GM18951 (cell line): ENCODE measurements at regions of chr15 and their contacts with region 1.

Region 1: DNA sequence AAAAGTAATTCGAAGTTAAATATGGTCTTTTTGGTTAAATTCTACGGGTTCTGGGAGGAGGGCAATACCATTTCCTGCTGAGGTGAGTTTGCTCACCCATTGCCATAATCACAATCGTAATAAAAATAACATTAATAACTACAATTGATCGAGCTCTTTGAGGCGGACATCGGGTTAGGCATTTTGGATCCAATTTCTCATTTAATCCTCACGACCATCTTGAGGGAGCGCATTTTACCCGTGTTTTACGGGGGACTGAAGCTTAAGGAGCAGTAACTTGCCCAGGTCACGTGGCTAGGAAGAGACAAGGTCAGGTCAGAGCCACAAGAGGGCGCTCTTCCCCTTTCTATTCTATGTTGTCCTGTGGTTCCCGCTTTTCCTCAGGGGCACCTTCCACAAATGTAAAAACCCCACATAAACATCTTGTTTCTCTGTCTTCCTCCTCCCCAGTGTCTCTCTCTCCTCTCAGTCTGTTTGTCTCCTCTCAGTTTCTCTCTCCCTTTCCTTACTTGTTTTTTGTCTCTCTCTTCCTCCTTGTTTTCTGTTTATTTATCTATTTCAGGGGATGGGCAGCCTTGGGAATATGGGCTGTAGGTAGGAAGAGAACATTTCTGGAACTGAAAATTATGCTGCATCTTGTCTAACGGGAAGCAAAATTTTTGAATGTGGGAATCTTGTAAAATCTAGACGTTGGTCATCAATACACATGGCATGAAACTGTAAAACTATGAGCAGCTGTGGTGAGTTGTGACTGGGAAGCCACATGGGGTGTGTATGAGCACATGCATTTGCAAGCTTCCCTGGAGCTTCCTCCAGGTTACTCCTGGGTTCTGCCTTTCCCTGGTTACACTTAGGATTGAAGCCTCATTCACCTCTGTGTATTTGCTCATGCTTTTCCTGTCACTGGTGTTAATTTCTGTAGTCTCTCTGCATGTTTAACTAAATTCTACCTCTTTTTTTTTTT is 71.0 kb downstream of the SQOR start:
- POLR2A ChIP-seq: no peak

Region 2: GRCh38 chr15:45110256-45110820 is 595.5 kb before region 1 on chr15:
- in situ Hi-C with region 1: no loop called
- POLR2A ChIP-seq: no peak

Region 3: DNA sequence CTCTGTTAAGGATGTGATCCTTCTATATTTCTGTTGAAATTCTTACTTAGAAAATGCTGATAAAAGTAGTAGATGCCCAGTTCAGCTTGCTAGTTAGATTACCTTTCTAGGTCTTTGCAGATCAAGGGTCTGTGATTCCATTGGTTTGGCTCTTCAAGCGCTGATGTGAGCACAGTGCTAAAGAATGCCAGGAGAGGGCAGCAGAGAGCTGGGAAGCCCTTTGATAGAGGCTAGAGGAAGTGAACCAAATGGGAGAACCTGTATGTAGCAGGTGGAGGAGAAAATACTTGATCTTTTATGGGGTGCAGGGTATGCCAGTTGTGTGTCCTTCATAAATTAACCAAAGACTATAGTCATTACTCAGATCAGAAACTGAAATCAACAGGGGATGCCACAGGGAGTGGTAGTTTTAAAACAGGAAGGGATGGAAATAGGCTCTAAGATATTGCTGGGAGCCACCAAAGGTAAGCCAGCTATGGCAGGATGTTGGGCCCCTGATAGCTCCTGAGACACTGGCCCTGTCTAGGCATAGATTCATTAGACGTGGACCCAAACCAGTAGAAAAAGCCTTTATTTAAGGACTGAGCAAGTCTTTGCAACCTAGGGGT is 606.4 kb after region 1 on chr15:
- in situ Hi-C with region 1: loop called (anchors 25 kb)
- POLR2A ChIP-seq: no peak